MCF 10A (cell line): ENCODE measurements at regions of chr1 and their contacts with region 1.

Region 1: DNA sequence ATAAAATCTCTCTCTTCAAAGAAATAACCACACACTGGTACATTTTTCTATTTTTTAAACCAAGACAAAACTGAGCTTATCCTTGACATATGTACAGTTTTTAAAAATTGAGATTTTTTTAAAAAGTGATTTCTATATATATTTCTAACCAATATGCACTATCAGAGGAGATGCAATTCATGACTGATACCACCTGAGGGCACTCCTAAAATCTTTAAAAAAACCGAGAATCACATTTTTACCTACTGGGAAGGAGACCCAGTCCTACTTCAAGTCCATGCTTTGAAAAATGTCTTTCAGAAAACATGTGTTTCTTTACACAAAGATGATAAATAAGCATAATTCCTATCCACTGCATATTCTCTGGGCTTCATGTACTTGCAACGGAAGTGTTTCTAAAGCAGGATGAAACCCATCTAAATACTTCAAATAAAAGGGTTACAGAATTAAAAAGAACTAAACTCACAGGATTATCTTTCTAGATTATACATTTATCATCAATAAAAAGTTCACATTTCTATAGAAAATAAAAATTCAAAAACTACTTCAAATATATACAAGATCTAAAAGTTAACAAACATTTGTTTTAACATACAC is 98.6 kb downstream of the ENAH start:
- DNase-seq: peak; percentile 67
- H3K4me3 Mint-ChIP-seq: no peak overlapping the region
- H3K27ac Mint-ChIP-seq: no peak overlapping the region
- H3K4me1 Mint-ChIP-seq: peaks cover 2% of the 10 kb centered on the region
- H3K27me3 Mint-ChIP-seq: no peaks in the 10 kb centered on the region
- CTCF ChIP-seq: peak; percentile 85

Region 2: GRCh38 chr1:225544263-225544662 is 10.1 kb before region 1 on chr1:
- CTCF ChIA-PET with region 1: interaction called, 28 read pairs
- POLR2A ChIA-PET with region 1: interaction called, 4 read pairs
- intact Hi-C with region 1: no loop called
- DNase-seq: no peak
- H3K4me3 Mint-ChIP-seq: no peak overlapping the region
- H3K27ac Mint-ChIP-seq: no peak overlapping the region
- H3K4me1 Mint-ChIP-seq: peaks cover 12% of the 10 kb centered on the region
- H3K27me3 Mint-ChIP-seq: no peaks in the 10 kb centered on the region
- CTCF ChIP-seq: no peak

Region 3: DNA sequence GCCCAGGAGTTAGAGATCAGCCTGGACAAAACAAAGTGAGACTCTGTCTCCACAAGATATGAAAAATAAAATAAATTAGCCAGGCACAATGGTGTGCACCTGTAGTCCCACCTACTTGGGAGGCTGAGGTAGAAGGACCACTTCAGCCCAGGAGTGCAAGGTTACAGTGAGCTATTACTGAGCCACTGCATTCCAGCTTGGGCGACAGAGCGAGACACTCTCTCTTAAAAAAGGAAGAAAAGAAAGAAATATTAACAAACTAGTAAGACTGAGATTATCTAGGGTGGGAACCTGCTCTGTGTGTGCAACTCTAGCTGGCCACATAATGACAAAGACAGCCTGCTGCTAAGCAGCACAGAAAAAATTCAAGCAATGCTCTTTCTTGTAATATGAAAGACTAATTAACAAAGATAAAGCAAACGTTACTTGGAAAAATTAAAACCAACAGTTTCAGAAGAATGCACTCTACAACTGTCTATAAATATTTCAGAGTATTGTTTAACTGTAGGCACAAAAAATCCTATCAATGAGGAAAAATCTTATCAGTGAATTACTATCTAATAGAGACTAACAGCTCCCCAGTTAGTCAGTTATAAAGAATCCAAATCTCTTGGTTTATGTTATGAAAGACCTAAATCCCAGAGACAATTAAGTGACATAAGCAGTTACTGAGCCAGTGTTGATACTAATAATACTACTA is 24.1 kb after region 1 on chr1:
- CTCF ChIA-PET with region 1: interaction called, 12 read pairs
- POLR2A ChIA-PET with region 1: interaction called, 6 read pairs
- intact Hi-C with region 1: no loop called
- DNase-seq: no peak
- H3K4me3 Mint-ChIP-seq: no peak overlapping the region
- H3K27ac Mint-ChIP-seq: no peak overlapping the region
- H3K4me1 Mint-ChIP-seq: peaks cover 28% of the 10 kb centered on the region
- H3K27me3 Mint-ChIP-seq: no peaks in the 10 kb centered on the region
- CTCF ChIP-seq: no peak

Region 4: GRCh38 chr1:225766967-225767633 is 212.8 kb after region 1 on chr1:
- CTCF ChIA-PET with region 1: interaction called, 245 read pairs
- POLR2A ChIA-PET with region 1: interaction called, 24 read pairs
- intact Hi-C with region 1: loop called (anchors 1 kb)
- DNase-seq: peak; percentile 99
- H3K4me3 Mint-ChIP-seq: peak overlapping the region; percentile 40
- H3K27ac Mint-ChIP-seq: peak overlapping the region; percentile 78
- H3K4me1 Mint-ChIP-seq: peaks cover 38% of the 10 kb centered on the region
- H3K27me3 Mint-ChIP-seq: no peaks in the 10 kb centered on the region
- CTCF ChIP-seq: no peak